Natural killer cell (primary cell): ENCODE measurements at regions of chr7 and their contacts with region 1.

Region 1: DNA sequence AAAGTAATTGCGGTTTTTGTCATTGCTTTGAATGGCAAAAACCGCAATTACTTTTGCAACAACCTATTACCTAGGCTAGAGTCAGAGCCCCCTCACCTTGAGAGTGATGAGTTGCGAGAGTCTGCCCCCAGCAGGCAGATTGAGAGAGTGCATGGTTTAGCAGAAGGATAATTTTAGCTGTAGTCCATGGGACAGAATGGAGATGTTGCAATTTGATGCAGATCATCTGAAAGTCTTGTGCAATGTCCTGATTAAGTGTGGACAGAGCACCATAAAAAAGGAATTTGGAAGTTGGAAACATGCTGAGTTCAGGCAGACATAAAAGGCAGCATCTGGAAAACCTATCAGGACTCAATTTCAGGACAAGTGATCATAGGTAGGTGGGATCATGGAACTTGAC is 48.7 kb downstream of the GPR141 start:
- DNase-seq: peak; percentile 38 to 49
- ATAC-seq: peak; percentile 86 to 98 (median 96)
- H3K4me3 ChIP-seq: no peak overlapping the region
- H3K4me3 Mint-ChIP-seq: no peak overlapping the region
- H3K27ac ChIP-seq: no peak overlapping the region
- H3K27ac Mint-ChIP-seq: peak overlapping the region; percentile 24 to 46
- H3K4me1 ChIP-seq: peaks cover 14% of the 10 kb centered on the region
- H3K4me1 Mint-ChIP-seq: peaks cover 47 to 51% of the 10 kb centered on the region in 2 donors
- H3K27me3 ChIP-seq: no peaks in the 10 kb centered on the region
- H3K27me3 Mint-ChIP-seq: no peaks in the 10 kb centered on the region
- CTCF ChIP-seq: peak; percentile 80

Region 2: DNA sequence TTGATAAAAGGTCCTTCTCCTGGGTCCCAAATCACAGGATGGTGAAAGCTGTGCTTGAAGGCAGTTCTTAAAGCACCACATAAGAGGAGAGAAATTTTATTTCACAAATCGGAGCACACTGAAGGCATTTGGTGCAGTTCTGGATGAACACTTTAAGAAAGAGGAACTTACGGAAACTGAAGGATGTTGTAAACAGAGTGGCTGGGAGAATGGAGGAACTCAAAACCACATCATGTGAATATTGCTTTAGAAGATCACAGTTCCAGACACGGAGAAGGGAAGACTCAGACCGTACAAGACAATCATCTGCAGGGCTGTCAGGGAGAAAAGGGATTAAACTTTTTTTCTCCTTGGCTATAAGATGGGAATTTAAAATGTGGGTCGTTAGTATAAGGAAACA is 57.7 kb before region 1 on chr7:
- intact Hi-C with region 1: loop called (anchors 10 kb)
- DNase-seq: no peak
- ATAC-seq: peak in 1 of 3 donors; percentile 65
- H3K4me3 ChIP-seq: no peak overlapping the region
- H3K4me3 Mint-ChIP-seq: no peak overlapping the region
- H3K27ac ChIP-seq: no peak overlapping the region
- H3K27ac Mint-ChIP-seq: peak overlapping the region in 1 of 2 donors; percentile 9
- H3K4me1 ChIP-seq: peaks cover 6% of the 10 kb centered on the region
- H3K4me1 Mint-ChIP-seq: peaks cover 12 to 41% of the 10 kb centered on the region in 2 donors
- H3K27me3 ChIP-seq: no peaks in the 10 kb centered on the region
- H3K27me3 Mint-ChIP-seq: no peaks in the 10 kb centered on the region
- CTCF ChIP-seq: no peak